Caco-2 (cell line): ENCODE measurements at regions of chr11 and their contacts with region 1.

Region 1: DNA sequence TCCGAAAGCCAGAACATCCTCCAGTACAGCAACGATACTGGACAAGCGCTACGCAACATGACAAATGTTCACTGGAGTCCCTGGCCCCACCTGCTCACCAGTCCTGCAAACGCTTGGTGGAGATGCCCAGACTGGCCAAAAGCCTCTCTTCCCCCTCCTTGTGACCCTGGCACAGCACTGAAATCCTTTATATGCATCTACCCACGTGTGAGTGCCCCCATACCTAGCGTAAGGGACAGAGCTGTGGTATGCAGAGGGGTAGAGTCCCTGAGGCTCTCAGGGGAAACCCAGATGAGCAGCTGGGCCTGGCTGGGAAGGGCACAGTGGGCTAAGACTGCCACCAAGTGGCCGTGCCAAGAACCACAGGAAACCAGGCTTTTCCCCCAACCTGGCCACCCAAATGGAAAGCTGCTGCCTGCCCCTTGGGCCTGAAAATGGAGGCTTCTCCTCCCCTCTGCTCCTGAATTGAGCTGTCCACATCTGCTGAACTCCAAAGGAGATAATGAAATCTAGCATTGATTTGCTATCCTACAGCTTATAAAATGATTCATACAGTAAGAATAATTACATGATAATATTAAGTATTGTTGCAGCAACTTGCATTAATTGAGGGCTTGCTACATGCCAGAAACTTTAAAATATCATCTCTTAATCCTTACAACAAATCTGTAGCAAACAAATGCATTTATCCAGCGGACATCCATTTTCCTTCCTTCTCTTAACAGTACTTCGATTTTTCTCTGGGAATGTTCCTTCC is 24.8 kb upstream of the TTC12 start:
- DNase-seq: peak; percentile 70 to 82
- H3K4me3 ChIP-seq: no peak overlapping the region
- H3K4me3 Mint-ChIP-seq: no peak overlapping the region
- H3K27ac Mint-ChIP-seq: no peak overlapping the region
- H3K4me1 ChIP-seq: peaks cover 15% of the 10 kb centered on the region
- H3K4me1 Mint-ChIP-seq: peaks cover 26% of the 10 kb centered on the region
- H3K27me3 ChIP-seq: no peaks in the 10 kb centered on the region
- H3K27me3 Mint-ChIP-seq: peaks cover 2% of the 10 kb centered on the region
- CTCF ChIP-seq: peak; percentile 95 to 99

Region 2: GRCh38 chr11:112795142-112795815 is 494.3 kb before region 1 on chr11:
- CTCF ChIA-PET with region 1: interaction called, 5 read pairs
- POLR2A ChIA-PET with region 1: no interaction called
- intact Hi-C with region 1: loop called (anchors 5 kb)
- DNase-seq: peak; percentile 66 to 76
- H3K4me3 ChIP-seq: no peak overlapping the region
- H3K4me3 Mint-ChIP-seq: no peak overlapping the region
- H3K27ac Mint-ChIP-seq: no peak overlapping the region
- H3K4me1 ChIP-seq: no peaks in the 10 kb centered on the region
- H3K4me1 Mint-ChIP-seq: no peaks in the 10 kb centered on the region
- H3K27me3 ChIP-seq: peaks cover 2% of the 10 kb centered on the region
- H3K27me3 Mint-ChIP-seq: peaks cover 19% of the 10 kb centered on the region
- CTCF ChIP-seq: peak; percentile 89

Region 3: DNA sequence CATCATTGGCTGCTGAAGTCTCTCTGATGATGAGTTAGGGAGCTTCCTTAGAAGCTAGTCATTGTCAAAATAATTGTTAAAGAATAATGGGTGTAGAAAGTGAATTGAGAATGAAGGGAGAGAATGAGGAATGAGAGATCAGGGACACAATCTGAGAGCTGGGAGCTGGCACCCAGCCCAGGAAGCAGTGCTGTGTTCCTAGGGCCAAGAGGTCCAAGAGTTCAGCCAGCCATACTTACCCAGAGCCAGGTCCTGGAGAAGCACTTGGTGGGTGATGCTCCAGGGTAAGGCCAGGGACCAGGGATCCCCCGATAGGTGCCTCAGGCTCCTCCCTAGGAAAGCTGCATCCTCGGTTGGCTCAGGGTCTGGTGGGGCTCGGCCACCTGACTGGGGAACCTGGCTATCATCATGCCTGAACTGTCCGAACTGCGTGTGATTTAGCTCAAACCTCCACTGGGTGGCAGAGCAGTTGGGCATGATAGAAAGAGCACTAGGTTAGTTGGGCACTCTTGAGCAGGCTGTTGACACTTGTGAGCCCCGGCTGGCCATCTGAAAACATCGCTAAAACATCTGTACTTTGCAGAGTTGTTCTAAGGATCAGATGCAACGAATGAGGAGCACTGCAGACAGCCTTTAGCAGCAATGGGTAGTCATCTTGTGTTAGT is 452.3 kb before region 1 on chr11:
- CTCF ChIA-PET with region 1: no interaction called
- POLR2A ChIA-PET with region 1: no interaction called
- intact Hi-C with region 1: loop called (anchors 1 kb)
- DNase-seq: peak in 1 of 2 experiments; percentile 19
- H3K4me3 ChIP-seq: no peak overlapping the region
- H3K4me3 Mint-ChIP-seq: no peak overlapping the region
- H3K27ac Mint-ChIP-seq: no peak overlapping the region
- H3K4me1 ChIP-seq: no peaks in the 10 kb centered on the region
- H3K4me1 Mint-ChIP-seq: no peaks in the 10 kb centered on the region
- H3K27me3 ChIP-seq: no peaks in the 10 kb centered on the region
- H3K27me3 Mint-ChIP-seq: peaks cover 7% of the 10 kb centered on the region
- CTCF ChIP-seq: peak; percentile 19 to 30

Region 4: GRCh38 chr11:113113801-113114706 is 175.6 kb before region 1 on chr11:
- CTCF ChIA-PET with region 1: interaction called, 5 read pairs
- POLR2A ChIA-PET with region 1: no interaction called
- intact Hi-C with region 1: loop called (anchors 2 kb)
- DNase-seq: peak; percentile 71
- H3K4me3 ChIP-seq: no peak overlapping the region
- H3K4me3 Mint-ChIP-seq: no peak overlapping the region
- H3K27ac Mint-ChIP-seq: no peak overlapping the region
- H3K4me1 ChIP-seq: no peaks in the 10 kb centered on the region
- H3K4me1 Mint-ChIP-seq: no peaks in the 10 kb centered on the region
- H3K27me3 ChIP-seq: 0 out of 2 replicates have a peak, but pooled peaks cover 1% of the 10 kb centered on the region
- H3K27me3 Mint-ChIP-seq: peaks cover 27% of the 10 kb centered on the region
- CTCF ChIP-seq: peak; percentile 86 to 98

Region 5: GRCh38 chr11:113167595-113167994 is 122.0 kb before region 1 on chr11:
- CTCF ChIA-PET with region 1: no interaction called
- POLR2A ChIA-PET with region 1: no interaction called
- intact Hi-C with region 1: loop called (anchors 5 kb)
- DNase-seq: no peak
- H3K4me3 ChIP-seq: no peak overlapping the region
- H3K4me3 Mint-ChIP-seq: no peak overlapping the region
- H3K27ac Mint-ChIP-seq: no peak overlapping the region
- H3K4me1 ChIP-seq: no peaks in the 10 kb centered on the region
- H3K4me1 Mint-ChIP-seq: no peaks in the 10 kb centered on the region
- H3K27me3 ChIP-seq: no peaks in the 10 kb centered on the region
- H3K27me3 Mint-ChIP-seq: peaks cover 36% of the 10 kb centered on the region
- CTCF ChIP-seq: no peak

Region 6: DNA sequence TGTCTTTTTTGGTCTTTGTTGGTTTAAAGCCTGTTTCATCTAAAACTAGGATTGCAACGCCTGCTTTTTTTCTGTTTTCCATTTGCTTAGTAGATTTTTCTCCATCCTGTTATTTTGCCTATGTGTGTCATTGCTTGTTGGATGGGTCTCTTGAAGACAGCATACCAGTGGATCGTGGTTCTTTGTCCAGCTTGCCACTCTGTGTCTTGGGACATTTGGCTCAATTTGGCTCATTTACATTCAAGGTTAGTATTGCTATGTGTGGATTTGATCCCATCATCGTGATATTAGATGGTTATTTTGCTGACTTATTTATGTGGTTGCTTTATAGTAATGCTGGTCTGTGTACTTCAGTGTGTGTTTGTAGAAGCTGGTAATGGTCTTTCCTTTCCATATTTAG is 66.6 kb after region 1 on chr11:
- CTCF ChIA-PET with region 1: no interaction called
- POLR2A ChIA-PET with region 1: no interaction called
- intact Hi-C with region 1: no loop called
- DNase-seq: no peak
- H3K4me3 ChIP-seq: no peak overlapping the region
- H3K4me3 Mint-ChIP-seq: no peak overlapping the region
- H3K27ac Mint-ChIP-seq: no peak overlapping the region
- H3K4me1 ChIP-seq: no peaks in the 10 kb centered on the region
- H3K4me1 Mint-ChIP-seq: no peaks in the 10 kb centered on the region
- H3K27me3 ChIP-seq: no peaks in the 10 kb centered on the region
- H3K27me3 Mint-ChIP-seq: no peaks in the 10 kb centered on the region
- CTCF ChIP-seq: no peak